CD8-positive, alpha-beta T cell (primary cell): ENCODE measurements at regions of chr1 and their contacts with region 1.

Region 1: DNA sequence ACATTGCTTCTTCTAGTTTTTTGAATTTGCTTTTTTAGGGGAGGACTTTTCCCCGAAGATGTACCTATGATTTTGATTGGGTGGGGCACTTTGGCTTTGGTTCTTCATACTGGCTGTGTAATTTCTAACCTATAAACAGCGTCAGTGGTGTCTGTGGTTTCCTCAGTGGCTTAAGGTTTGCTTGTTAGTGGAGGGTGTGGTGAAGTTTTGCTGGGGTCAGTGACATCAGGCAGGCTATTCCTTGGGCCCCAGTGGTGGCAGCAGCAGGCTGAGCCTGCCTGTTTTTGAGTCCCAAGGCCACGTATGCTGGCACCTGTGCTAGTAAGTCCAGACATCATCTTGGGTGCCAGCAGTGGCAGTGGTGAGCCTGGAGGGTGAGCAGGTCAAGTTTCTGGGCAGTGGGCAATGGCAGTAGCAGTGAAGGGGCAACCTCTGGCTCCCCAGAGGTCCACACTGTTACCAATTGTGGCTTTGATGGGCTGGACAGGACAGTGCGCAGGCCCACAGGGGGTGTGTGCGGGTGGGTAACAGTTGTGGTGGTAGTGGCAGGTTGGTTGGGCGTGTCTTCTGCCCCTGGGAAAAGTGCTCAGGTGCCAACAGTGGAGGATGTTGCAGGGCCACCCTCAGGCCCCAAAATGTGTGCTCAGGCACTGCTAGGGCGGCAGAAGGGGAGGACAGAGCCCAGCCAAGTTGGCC is 54.9 kb upstream of the B3GALT2 start:
- DNase-seq: peak in 1 of 9 experiments; percentile 24
- ATAC-seq: no peak
- H3K4me3 ChIP-seq: no peak overlapping the region
- H3K4me3 Mint-ChIP-seq: no peak overlapping the region
- H3K27ac ChIP-seq: no peak overlapping the region
- H3K27ac Mint-ChIP-seq: peak overlapping the region; percentile 73
- H3K4me1 ChIP-seq: peaks cover 10% of the 10 kb centered on the region
- H3K4me1 Mint-ChIP-seq: peaks cover 33% of the 10 kb centered on the region
- H3K27me3 ChIP-seq: no peaks in the 10 kb centered on the region
- H3K27me3 Mint-ChIP-seq: no peaks in the 10 kb centered on the region
- CTCF ChIP-seq: no peak

Region 2: DNA sequence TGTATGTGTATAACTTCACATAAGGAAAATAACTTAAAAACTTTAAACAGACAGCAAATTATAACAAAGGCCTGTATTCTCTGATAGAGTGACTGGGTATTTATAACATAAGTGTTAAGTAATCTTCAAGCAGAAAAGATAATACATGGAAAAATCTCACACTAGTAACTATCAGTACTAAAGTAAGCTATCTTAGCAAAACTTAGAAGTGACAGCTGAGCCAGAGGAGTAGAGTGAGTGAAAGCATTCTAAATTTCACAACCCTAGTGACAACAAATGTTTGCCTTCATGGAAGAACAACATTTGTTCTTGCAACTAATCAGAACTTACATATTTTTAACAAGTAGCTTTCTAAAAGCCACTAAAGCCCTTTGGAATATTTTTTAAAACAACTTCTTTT is 19.6 kb after region 1 on chr1:
- CTCF ChIA-PET with region 1: no interaction called
- POLR2A ChIA-PET with region 1: no interaction called
- intact Hi-C with region 1: loop called in 1 of 2 experiments (anchors 2 kb)
- DNase-seq: no peak
- ATAC-seq: no peak
- H3K4me3 ChIP-seq: no peak overlapping the region
- H3K4me3 Mint-ChIP-seq: no peak overlapping the region
- H3K27ac ChIP-seq: no peak overlapping the region
- H3K27ac Mint-ChIP-seq: no peak overlapping the region
- H3K4me1 ChIP-seq: no peaks in the 10 kb centered on the region
- H3K4me1 Mint-ChIP-seq: peaks cover 2% of the 10 kb centered on the region
- H3K27me3 ChIP-seq: no peaks in the 10 kb centered on the region
- H3K27me3 Mint-ChIP-seq: no peaks in the 10 kb centered on the region
- CTCF ChIP-seq: no peak

Region 3: DNA sequence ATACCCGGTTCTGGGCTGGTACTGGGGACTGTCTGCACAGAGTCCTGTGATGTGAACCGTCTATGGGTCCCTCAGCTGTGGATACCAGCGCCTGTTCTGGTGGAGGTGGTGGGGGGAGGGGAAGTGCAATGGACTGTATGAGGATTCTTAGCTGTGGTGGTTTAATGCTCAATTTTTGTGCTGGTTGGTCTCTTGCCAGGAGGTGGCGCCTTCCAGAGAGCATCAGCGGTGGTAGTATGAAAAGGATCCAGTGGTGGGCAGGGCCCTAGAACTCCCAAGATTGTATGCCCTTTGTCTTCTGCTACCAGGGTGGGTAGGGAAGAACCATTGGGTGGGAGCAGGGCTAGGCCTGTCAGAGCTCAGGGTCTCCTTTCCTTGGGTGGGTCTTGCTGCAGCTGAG is 34.5 kb after region 1 on chr1:
- CTCF ChIA-PET with region 1: no interaction called
- POLR2A ChIA-PET with region 1: no interaction called
- intact Hi-C with region 1: loop called in 1 of 2 experiments (anchors 5 kb)
- DNase-seq: no peak
- ATAC-seq: no peak
- H3K4me3 ChIP-seq: no peak overlapping the region
- H3K4me3 Mint-ChIP-seq: no peak overlapping the region
- H3K27ac ChIP-seq: no peak overlapping the region
- H3K27ac Mint-ChIP-seq: no peak overlapping the region
- H3K4me1 ChIP-seq: no peaks in the 10 kb centered on the region
- H3K4me1 Mint-ChIP-seq: no peaks in the 10 kb centered on the region
- H3K27me3 ChIP-seq: no peaks in the 10 kb centered on the region
- H3K27me3 Mint-ChIP-seq: no peaks in the 10 kb centered on the region
- CTCF ChIP-seq: no peak

Region 4: GRCh38 chr1:194252199-194252598 is 1010.9 kb after region 1 on chr1:
- CTCF ChIA-PET with region 1: no interaction called
- POLR2A ChIA-PET with region 1: no interaction called
- intact Hi-C with region 1: no loop called
- DNase-seq: no peak
- ATAC-seq: no peak
- H3K4me3 ChIP-seq: no peak overlapping the region
- H3K4me3 Mint-ChIP-seq: no peak overlapping the region
- H3K27ac ChIP-seq: no peak overlapping the region
- H3K27ac Mint-ChIP-seq: no peak overlapping the region
- H3K4me1 ChIP-seq: no peaks in the 10 kb centered on the region
- H3K4me1 Mint-ChIP-seq: no peaks in the 10 kb centered on the region
- H3K27me3 ChIP-seq: no peaks in the 10 kb centered on the region
- H3K27me3 Mint-ChIP-seq: no peaks in the 10 kb centered on the region
- CTCF ChIP-seq: no peak